ENCODE measurements at regions of chr6 and their contacts with region 1.

Region 1: GRCh38 chr6:3251462-3252314 is 7.1 kb upstream of the PSMG4 start:
- DNase-seq: peak; percentile 86
- ATAC-seq: peak; percentile 94
- H3K4me3 Mint-ChIP-seq: peak overlapping the region; percentile 12
- H3K27ac Mint-ChIP-seq: no peak overlapping the region
- H3K4me1 Mint-ChIP-seq: peaks cover 10% of the 10 kb centered on the region
- H3K27me3 Mint-ChIP-seq: peaks cover 39% of the 10 kb centered on the region

Region 2: DNA sequence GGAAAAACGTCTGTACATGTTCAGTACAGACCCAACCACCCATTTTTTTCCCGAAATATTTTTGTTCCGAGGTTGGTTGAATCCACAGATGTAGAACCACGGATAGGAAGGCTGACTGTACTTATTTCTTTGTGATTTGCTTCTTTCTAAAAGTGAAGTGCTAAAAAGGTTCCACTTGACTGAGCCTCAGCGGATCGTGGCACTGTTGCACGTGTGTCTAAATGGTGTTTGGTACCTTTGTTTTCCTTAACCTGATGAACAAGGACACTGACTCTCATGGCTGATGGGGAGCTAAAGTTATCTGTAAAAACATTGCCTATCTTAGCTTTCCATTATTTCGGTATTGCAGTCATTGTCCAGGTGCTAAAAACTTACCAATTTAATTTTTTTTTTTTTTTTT is 127.0 kb before region 1 on chr6:
- CTCF ChIA-PET with region 1: interaction called, 32 read pairs
- DNase-seq: no peak
- ATAC-seq: no peak
- H3K4me3 Mint-ChIP-seq: no peak overlapping the region
- H3K27ac Mint-ChIP-seq: no peak overlapping the region
- H3K4me1 Mint-ChIP-seq: peaks cover 8% of the 10 kb centered on the region
- H3K27me3 Mint-ChIP-seq: no peaks in the 10 kb centered on the region

Region 3: GRCh38 chr6:3162565-3163247 is 89.0 kb before region 1 on chr6:
- CTCF ChIA-PET with region 1: interaction called, 12 read pairs
- DNase-seq: peak; percentile 70
- ATAC-seq: peak; percentile 82
- H3K4me3 Mint-ChIP-seq: peak overlapping the region; percentile 75
- H3K27ac Mint-ChIP-seq: peak overlapping the region; percentile 51
- H3K4me1 Mint-ChIP-seq: peaks cover 20% of the 10 kb centered on the region
- H3K27me3 Mint-ChIP-seq: peaks cover 35% of the 10 kb centered on the region

Region 4: DNA sequence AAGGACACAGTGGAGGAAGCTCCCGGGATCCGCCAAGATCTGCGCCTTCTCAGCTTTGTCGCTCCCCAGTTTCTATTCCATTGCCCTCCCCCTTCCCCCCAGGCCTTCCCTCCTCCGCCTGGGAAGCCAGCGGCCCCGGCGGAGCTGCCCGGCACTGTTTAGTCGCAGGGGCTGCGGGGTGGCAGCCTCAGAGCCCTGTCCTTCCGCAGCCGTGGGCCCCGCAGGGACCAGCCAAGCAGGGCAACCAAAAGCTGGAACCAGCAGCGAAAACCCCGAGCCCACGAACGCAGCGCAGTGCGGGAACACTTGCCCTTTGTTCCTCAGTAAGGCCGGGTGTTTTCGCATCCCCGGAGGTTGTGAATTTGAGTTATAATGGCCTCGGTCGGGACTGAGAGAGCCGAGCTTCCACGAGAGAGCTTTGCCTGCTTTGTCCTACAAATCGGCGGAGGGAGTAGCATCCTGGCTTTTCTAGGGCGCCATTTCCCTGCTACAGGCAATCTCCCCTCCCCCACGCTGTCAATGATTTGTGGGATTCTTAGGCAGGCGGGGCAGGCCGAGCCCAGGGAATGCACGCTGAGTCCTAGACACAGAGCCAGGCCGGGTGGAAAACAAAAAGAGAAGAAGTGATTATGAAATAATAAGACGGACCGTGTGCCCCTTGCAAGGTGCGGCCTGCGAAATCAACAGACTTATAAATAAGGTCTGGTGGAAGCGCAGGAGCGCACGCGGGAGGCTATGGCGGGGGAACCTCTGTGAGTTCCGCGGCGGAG is 20.3 kb before region 1 on chr6:
- CTCF ChIA-PET with region 1: interaction called, 16 read pairs
- DNase-seq: no peak
- ATAC-seq: no peak
- H3K4me3 Mint-ChIP-seq: no peak overlapping the region
- H3K27ac Mint-ChIP-seq: no peak overlapping the region
- H3K4me1 Mint-ChIP-seq: peaks cover 37% of the 10 kb centered on the region
- H3K27me3 Mint-ChIP-seq: peaks cover 87% of the 10 kb centered on the region

Region 5: DNA sequence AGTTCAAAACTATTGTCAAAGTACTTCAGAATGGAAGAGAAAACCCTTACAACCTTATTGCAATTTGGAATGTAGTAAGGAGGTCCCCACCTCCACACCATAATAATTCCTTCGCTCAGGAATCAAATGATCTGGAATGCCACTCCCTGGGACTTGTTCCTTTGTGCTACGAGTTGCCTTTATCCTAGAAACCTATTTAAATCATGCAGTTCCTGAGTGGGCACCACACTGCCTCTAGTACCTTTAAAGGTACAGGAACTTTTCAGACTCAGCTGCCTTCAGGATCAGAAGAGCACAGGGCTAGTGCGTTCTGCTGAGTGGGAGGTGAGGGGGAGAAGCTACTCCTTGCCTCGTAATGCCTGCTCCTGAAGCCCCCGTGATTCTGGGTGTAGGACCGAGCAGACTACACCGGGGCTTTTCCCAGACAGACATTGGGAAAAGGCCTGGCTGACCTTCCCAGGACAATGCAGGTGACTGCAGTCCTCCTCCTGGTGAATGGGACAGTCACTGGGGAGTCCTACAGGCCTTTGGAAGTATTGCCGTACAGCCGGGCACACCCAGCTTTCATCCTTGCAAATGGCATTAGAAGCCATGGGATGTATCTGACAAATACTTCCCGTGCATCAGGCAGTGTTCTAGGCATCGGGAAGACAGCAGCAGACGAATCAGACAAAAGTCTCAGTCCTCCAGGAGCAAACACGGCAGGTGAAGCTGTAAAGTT is 12.4 kb before region 1 on chr6:
- CTCF ChIA-PET with region 1: interaction called, 13 read pairs
- DNase-seq: no peak
- ATAC-seq: no peak
- H3K4me3 Mint-ChIP-seq: no peak overlapping the region
- H3K27ac Mint-ChIP-seq: no peak overlapping the region
- H3K4me1 Mint-ChIP-seq: no peaks in the 10 kb centered on the region
- H3K27me3 Mint-ChIP-seq: peaks cover 64% of the 10 kb centered on the region

Measured in activated CD8-positive, alpha-beta memory T cell treated with anti-CD3 and anti-CD28 coated beads, Interleukin-2, amount 10 ng/mL, durations not matched to agents 7 days and 5 days (primary cell).